PC-3 (cell line): ENCODE measurements at regions of chr18 and their contacts with region 1.

Region 1: DNA sequence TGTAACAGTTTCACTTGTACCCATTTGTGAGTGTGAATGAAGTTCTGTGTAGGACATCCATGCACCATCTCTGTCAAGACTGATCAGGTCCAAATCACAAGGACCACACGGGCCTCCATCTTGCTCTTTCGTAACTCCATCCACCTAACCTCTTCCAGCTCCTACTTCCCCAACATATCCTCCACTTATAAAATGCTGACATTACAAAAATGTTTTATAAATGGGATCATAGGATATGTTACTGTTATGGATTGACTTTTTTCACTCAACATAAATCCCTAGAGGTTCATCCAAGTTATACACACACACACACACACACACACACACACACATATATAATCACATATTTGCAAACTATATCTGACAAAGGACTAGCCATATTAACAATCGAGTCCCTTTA is 476.8 kb downstream of the ZNF516 start:
- DNase-seq: no peak
- ATAC-seq: no peak
- H3K4me3 ChIP-seq: no peak overlapping the region
- H3K27ac ChIP-seq: no peak overlapping the region
- H3K4me1 ChIP-seq: no peaks in the 10 kb centered on the region
- H3K27me3 ChIP-seq: peaks cover 12% of the 10 kb centered on the region
- CTCF ChIP-seq: no peak

Region 2: GRCh38 chr18:75898651-75899050 is 119.6 kb before region 1 on chr18:
- CTCF ChIA-PET with region 1: no interaction called
- POLR2A ChIA-PET with region 1: no interaction called
- intact Hi-C with region 1: no loop called
- DNase-seq: no peak
- ATAC-seq: no peak
- H3K4me3 ChIP-seq: no peak overlapping the region
- H3K27ac ChIP-seq: no peak overlapping the region
- H3K4me1 ChIP-seq: no peaks in the 10 kb centered on the region
- H3K27me3 ChIP-seq: peaks cover 48% of the 10 kb centered on the region
- CTCF ChIP-seq: no peak

Region 3: GRCh38 chr18:76126327-76126726 is 108.1 kb after region 1 on chr18:
- CTCF ChIA-PET with region 1: no interaction called
- POLR2A ChIA-PET with region 1: interaction called, 11 read pairs
- intact Hi-C with region 1: no loop called
- DNase-seq: no peak
- ATAC-seq: no peak
- H3K4me3 ChIP-seq: no peak overlapping the region
- H3K27ac ChIP-seq: no peak overlapping the region
- H3K4me1 ChIP-seq: no peaks in the 10 kb centered on the region
- H3K27me3 ChIP-seq: peaks cover 55% of the 10 kb centered on the region
- CTCF ChIP-seq: no peak

Region 4: DNA sequence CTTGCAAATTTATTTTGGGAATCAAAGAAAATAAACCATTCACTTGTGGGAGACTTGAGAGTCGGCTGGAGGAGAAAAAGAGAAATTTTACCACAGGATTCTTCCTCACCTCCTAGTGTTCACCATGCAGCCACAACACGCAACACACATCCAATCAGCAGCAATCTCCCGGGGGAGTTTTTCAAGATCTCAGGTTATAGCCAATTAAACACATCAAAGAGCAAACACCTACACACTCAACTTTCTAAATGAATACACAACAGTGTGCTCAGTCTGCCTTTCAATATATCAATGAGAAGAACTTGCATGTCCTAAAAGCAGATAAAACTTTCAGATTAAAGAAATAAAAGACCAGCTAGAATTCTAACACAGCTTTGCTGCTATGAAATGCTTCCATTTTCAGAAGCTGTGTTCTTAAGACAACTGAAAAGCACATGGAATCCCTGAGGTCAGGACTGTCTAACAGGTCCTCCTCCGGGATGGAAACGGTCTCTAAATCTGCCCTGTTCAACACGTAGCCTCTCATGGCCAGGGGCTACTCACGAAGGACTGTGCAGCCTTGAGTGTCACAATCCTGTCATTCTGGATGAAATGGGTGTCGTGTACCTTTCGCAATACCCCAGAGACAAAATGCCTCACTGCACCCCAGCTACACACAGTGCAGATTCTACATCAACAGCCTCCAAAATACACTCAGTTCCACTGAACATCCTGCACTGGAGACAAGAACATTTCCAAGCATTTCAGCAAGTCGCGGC is 392.6 kb after region 1 on chr18:
- CTCF ChIA-PET with region 1: no interaction called
- POLR2A ChIA-PET with region 1: no interaction called
- intact Hi-C with region 1: no loop called
- DNase-seq: no peak
- ATAC-seq: no peak
- H3K4me3 ChIP-seq: no peak overlapping the region
- H3K27ac ChIP-seq: no peak overlapping the region
- H3K4me1 ChIP-seq: no peaks in the 10 kb centered on the region
- H3K27me3 ChIP-seq: peaks cover 38% of the 10 kb centered on the region
- CTCF ChIP-seq: no peak